ENCODE measurements at regions of chr10 and their contacts with region 1.

Region 1: GRCh38 chr10:99620713-99621453 is 644 bp upstream of the SLC25A28 start:
- DNase-seq: peak; percentile 79 to 91 (median 86)
- ATAC-seq: peak; percentile 83
- H3K4me3 ChIP-seq: peak overlapping the region; percentile 76 to 78
- H3K4me3 Mint-ChIP-seq: peak overlapping the region; percentile 85
- H3K27ac ChIP-seq: peak overlapping the region; percentile 96 to 97
- H3K27ac Mint-ChIP-seq: peak overlapping the region; percentile 97
- H3K4me1 ChIP-seq: peaks cover 27% of the 10 kb centered on the region
- H3K4me1 Mint-ChIP-seq: peaks cover 45% of the 10 kb centered on the region
- H3K27me3 ChIP-seq: no peaks in the 10 kb centered on the region
- H3K27me3 Mint-ChIP-seq: no peaks in the 10 kb centered on the region
- CTCF ChIP-seq: no peak

Region 2: DNA sequence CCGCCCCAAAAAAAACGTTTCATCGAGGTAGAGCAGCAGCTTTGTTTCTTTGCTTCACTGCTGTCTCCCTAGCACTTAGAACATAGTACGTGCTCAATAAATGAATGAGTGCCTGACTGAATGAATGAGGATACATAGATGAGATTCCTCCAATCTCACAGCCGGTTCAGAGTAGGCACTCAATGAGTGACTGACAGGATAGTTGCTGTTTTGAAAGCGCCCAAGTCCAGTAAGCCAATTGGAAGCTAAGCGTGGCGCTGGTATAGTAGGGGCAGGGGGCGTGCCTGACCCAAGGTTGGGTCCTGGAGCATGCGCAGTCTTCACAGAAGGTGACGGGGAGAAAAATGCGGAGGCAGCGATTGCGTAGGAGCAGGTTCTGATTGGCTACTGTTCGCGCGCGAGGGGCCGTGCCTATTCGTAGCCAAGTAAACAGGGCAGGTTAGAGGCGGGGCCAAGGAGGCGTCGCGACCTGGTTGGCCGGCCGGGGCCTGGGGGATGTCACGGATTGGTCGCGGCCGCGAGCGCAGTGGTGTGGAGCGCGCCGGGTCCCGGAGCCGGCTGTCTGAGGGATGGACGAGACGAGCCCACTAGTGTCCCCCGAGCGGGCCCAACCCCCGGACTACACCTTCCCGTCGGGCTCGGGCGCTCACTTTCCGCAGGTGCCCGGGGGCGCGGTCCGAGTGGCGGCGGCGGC is 1980.6 kb before region 1 on chr10 and contains the start of gene PI4K2A:
- CTCF ChIA-PET with region 1: no interaction called
- POLR2A ChIA-PET with region 1: no interaction called
- intact Hi-C with region 1: loop called in 1 of 2 experiments (anchors 10 kb)
- DNase-seq: peak; percentile 97 to 100 (median 98)
- ATAC-seq: peak; percentile 97
- H3K4me3 ChIP-seq: peak within 1 kb of the TSS; percentile 58 to 84
- H3K4me3 Mint-ChIP-seq: peak within 1 kb of the TSS; percentile 95
- H3K27ac ChIP-seq: peak within 1 kb of the TSS; percentile 54 to 55
- H3K27ac Mint-ChIP-seq: peak within 1 kb of the TSS; percentile 90
- H3K4me1 ChIP-seq: peaks cover 10% of the 10 kb centered on the region
- H3K4me1 Mint-ChIP-seq: peaks cover 24% of the 10 kb centered on the region
- H3K27me3 ChIP-seq: no peaks in the 10 kb centered on the region
- H3K27me3 Mint-ChIP-seq: no peaks in the 10 kb centered on the region
- CTCF ChIP-seq: no peak
- total RNA-seq, gene PI4K2A: 37.6 to 37.7 TPM

Region 3: GRCh38 chr10:98446661-98447221 is 1174.1 kb before region 1 on chr10 and contains the start of gene HPS1:
- CTCF ChIA-PET with region 1: no interaction called
- POLR2A ChIA-PET with region 1: no interaction called
- intact Hi-C with region 1: loop called in 1 of 2 experiments (anchors 1 kb)
- DNase-seq: peak; percentile 60 to 89 (median 79)
- ATAC-seq: peak; percentile 85
- H3K4me3 ChIP-seq: peak within 1 kb of the TSS; percentile 74 to 91
- H3K4me3 Mint-ChIP-seq: peak within 1 kb of the TSS; percentile 90
- H3K27ac ChIP-seq: peak within 1 kb of the TSS; percentile 81 to 90
- H3K27ac Mint-ChIP-seq: peak within 1 kb of the TSS; percentile 92
- H3K4me1 ChIP-seq: peaks cover 16% of the 10 kb centered on the region
- H3K4me1 Mint-ChIP-seq: peaks cover 45% of the 10 kb centered on the region
- H3K27me3 ChIP-seq: no peaks in the 10 kb centered on the region
- H3K27me3 Mint-ChIP-seq: peaks cover under 1% of the 10 kb centered on the region
- CTCF ChIP-seq: no peak
- total RNA-seq, gene HPS1: 54.1 to 54.3 TPM

Region 4: GRCh38 chr10:99430451-99431189 is 190.3 kb before region 1 on chr10 and contains the start of gene GOT1:
- CTCF ChIA-PET with region 1: interaction called, 15 read pairs
- POLR2A ChIA-PET with region 1: interaction called, 4 read pairs
- intact Hi-C with region 1: loop called (anchors 1 kb)
- DNase-seq: peak; percentile 83 to 98 (median 89)
- ATAC-seq: peak; percentile 92
- H3K4me3 ChIP-seq: peak within 1 kb of the TSS; percentile 81 to 96
- H3K4me3 Mint-ChIP-seq: peak within 1 kb of the TSS; percentile 98
- H3K27ac ChIP-seq: peak within 1 kb of the TSS; percentile 66 to 81
- H3K27ac Mint-ChIP-seq: peak within 1 kb of the TSS; percentile 96
- H3K4me1 ChIP-seq: peaks cover 21% of the 10 kb centered on the region
- H3K4me1 Mint-ChIP-seq: peaks cover 40% of the 10 kb centered on the region
- H3K27me3 ChIP-seq: no peaks in the 10 kb centered on the region
- H3K27me3 Mint-ChIP-seq: no peaks in the 10 kb centered on the region
- CTCF ChIP-seq: no peak
- total RNA-seq, gene GOT1: 7.2 to 8.6 TPM

Region 5: GRCh38 chr10:99682752-99683151 is 61.9 kb after region 1 on chr10:
- CTCF ChIA-PET with region 1: no interaction called
- POLR2A ChIA-PET with region 1: no interaction called
- intact Hi-C with region 1: no loop called
- DNase-seq: no peak
- ATAC-seq: no peak
- H3K4me3 ChIP-seq: no peak overlapping the region
- H3K4me3 Mint-ChIP-seq: no peak overlapping the region
- H3K27ac ChIP-seq: no peak overlapping the region
- H3K27ac Mint-ChIP-seq: no peak overlapping the region
- H3K4me1 ChIP-seq: no peaks in the 10 kb centered on the region
- H3K4me1 Mint-ChIP-seq: no peaks in the 10 kb centered on the region
- H3K27me3 ChIP-seq: no peaks in the 10 kb centered on the region
- H3K27me3 Mint-ChIP-seq: no peaks in the 10 kb centered on the region
- CTCF ChIP-seq: no peak

Region 6: GRCh38 chr10:99693933-99694583 is 73.2 kb after region 1 on chr10:
- CTCF ChIA-PET with region 1: no interaction called
- POLR2A ChIA-PET with region 1: no interaction called
- intact Hi-C with region 1: no loop called
- DNase-seq: no peak
- ATAC-seq: no peak
- H3K4me3 ChIP-seq: no peak overlapping the region
- H3K4me3 Mint-ChIP-seq: no peak overlapping the region
- H3K27ac ChIP-seq: no peak overlapping the region
- H3K27ac Mint-ChIP-seq: peak overlapping the region; percentile 23
- H3K4me1 ChIP-seq: no peaks in the 10 kb centered on the region
- H3K4me1 Mint-ChIP-seq: no peaks in the 10 kb centered on the region
- H3K27me3 ChIP-seq: no peaks in the 10 kb centered on the region
- H3K27me3 Mint-ChIP-seq: no peaks in the 10 kb centered on the region
- CTCF ChIP-seq: no peak

Region 7: GRCh38 chr10:99711129-99711719 is 90.3 kb after region 1 on chr10:
- CTCF ChIA-PET with region 1: interaction called, 5 read pairs
- POLR2A ChIA-PET with region 1: no interaction called
- intact Hi-C with region 1: loop called in 1 of 2 experiments (anchors 5 kb)
- DNase-seq: peak in 3 of 9 experiments; percentile 25 to 60 (median 49)
- ATAC-seq: peak; percentile 64
- H3K4me3 ChIP-seq: no peak overlapping the region
- H3K4me3 Mint-ChIP-seq: no peak overlapping the region
- H3K27ac ChIP-seq: no peak overlapping the region
- H3K27ac Mint-ChIP-seq: no peak overlapping the region
- H3K4me1 ChIP-seq: no peaks in the 10 kb centered on the region
- H3K4me1 Mint-ChIP-seq: no peaks in the 10 kb centered on the region
- H3K27me3 ChIP-seq: no peaks in the 10 kb centered on the region
- H3K27me3 Mint-ChIP-seq: no peaks in the 10 kb centered on the region
- CTCF ChIP-seq: peak; percentile 41

Region 8: DNA sequence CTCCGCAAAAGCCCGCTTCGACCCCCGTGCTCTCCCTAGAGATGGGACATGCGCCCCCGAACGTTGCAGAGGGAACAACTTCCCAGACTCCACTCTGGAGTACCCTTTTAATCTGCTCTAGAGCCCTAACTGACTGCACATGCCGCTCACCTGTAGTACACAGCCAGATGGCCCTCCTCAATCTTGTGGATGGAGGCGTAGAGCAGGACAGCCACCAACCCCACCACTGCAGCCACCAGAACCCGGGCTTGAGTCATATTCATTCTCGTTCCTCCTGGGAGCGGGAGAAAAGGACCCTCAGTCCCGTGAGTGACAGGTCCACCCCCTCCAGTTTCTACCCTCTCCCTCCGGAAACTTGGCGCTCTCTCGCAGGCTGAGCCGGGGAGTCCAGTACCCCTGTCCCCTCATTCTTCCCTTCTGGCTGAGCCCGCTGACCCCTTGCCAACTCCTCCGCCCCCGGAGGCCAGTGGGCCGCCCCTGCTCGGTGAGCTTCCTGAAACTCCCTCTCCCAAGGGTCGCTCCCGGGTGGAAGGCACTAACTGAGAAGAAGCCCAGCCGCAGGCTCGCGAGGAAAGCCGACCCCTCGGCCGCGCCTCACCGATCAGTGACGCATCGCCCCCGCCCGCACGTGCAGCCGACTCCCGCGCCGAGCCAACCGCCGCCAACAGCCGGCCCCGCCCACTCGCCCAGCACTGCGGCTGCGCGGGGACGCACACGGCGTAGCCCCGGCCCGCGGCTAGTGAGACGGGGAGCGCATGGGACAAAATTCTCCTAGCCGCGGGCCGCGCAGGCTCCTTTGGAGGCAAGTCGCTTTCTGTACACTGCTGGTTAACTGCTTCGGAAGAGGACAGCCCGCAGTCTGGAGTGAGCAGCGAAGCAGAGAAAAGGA is 564.7 kb after region 1 on chr10 and contains the start of gene ERLIN1:
- CTCF ChIA-PET with region 1: no interaction called
- POLR2A ChIA-PET with region 1: no interaction called
- intact Hi-C with region 1: loop called in 1 of 2 experiments (anchors 10 kb)
- DNase-seq: peak; percentile 78 to 95 (median 91)
- ATAC-seq: peak; percentile 93
- H3K4me3 ChIP-seq: peak within 1 kb of the TSS; percentile 68 to 96
- H3K4me3 Mint-ChIP-seq: peak within 1 kb of the TSS; percentile 98
- H3K27ac ChIP-seq: peak within 1 kb of the TSS; percentile 85 to 89
- H3K27ac Mint-ChIP-seq: peak within 1 kb of the TSS; percentile 95
- H3K4me1 ChIP-seq: peaks cover 24% of the 10 kb centered on the region
- H3K4me1 Mint-ChIP-seq: peaks cover 64% of the 10 kb centered on the region
- H3K27me3 ChIP-seq: no peaks in the 10 kb centered on the region
- H3K27me3 Mint-ChIP-seq: no peaks in the 10 kb centered on the region
- CTCF ChIP-seq: no peak
- total RNA-seq, gene ERLIN1: 2.0 to 3.1 TPM

Measured in CD8-positive, alpha-beta T cell (primary cell).